ENCODE measurements at regions of chr1 and their contacts with region 1.

Region 1: DNA sequence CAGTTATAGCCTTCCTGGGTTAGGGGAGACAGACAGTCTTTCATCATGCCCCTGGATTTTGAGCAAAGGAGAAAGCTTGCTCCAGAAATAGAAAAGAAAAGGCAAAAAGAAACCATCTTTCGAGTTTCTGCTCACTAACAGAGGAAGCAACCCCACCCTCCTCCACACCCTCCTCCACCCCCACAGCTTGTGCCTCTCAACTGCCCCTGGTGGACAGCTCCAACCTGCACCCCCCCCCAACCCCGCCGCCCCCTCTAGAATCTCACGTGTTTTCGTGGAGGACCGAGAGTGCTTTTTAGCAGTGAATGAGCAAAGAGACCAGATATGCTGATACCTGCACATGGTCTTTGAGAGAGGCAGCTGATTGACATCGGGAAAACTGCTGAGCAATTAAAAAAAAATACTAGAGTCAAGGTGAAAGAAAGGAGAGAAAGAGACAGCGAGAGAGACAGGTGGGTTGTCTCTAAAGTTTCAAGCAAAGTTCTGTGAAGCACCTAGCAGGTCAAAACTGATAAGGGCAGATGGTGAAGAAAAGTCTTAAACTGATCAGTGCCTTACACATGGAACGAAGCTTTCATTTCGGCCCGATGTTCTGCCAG is 358.3 kb downstream of the KIF26B start:
- DNase-seq: no peak
- ATAC-seq: no peak
- H3K4me3 ChIP-seq: no peak overlapping the region
- H3K27ac ChIP-seq: no peak overlapping the region
- H3K4me1 ChIP-seq: no peaks in the 10 kb centered on the region
- H3K27me3 ChIP-seq: peaks cover 23% of the 10 kb centered on the region
- CTCF ChIP-seq: no peak

Region 2: DNA sequence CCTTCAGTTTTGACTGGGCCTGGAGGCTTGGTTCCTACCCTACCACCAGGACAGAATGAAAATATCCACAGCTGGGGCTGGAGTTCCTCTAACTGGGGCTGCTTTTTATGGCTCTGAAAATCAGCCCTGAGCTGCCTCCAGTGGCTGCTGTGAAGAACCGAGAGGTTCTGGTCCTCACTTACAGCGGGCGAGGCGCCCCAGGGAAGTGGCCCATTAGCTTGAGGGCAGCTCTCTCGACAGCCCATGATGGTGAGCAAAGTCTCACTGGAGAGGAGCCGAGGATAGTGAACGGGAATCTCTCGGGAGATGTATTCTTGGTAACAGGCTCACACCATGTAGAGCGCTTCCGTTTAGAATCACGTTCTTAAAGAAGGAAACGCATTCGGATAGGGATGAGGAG is 101.4 kb after region 1 on chr1:
- CTCF ChIA-PET with region 1: no interaction called
- POLR2A ChIA-PET with region 1: no interaction called
- in situ Hi-C with region 1: no loop called
- intact Hi-C with region 1: loop called (anchors 10 kb)
- DNase-seq: no peak
- ATAC-seq: no peak
- H3K4me3 ChIP-seq: no peak overlapping the region
- H3K27ac ChIP-seq: no peak overlapping the region
- H3K4me1 ChIP-seq: no peaks in the 10 kb centered on the region
- H3K27me3 ChIP-seq: peaks cover 3% of the 10 kb centered on the region; the same call in 1 of the 2 replicates
- CTCF ChIP-seq: no peak

Region 3: GRCh38 chr1:246002725-246003441 is 489.8 kb after region 1 on chr1:
- CTCF ChIA-PET with region 1: no interaction called
- POLR2A ChIA-PET with region 1: no interaction called
- in situ Hi-C with region 1: no loop called
- intact Hi-C with region 1: loop called (anchors 2 kb)
- DNase-seq: peak; percentile 61
- ATAC-seq: peak; percentile 88
- H3K4me3 ChIP-seq: no peak overlapping the region
- H3K27ac ChIP-seq: no peak overlapping the region
- H3K4me1 ChIP-seq: peaks cover 4% of the 10 kb centered on the region; the same call in 1 of the 2 replicates
- H3K27me3 ChIP-seq: no peaks in the 10 kb centered on the region
- CTCF ChIP-seq: peak; percentile 90